WTC11 (cell line): ENCODE measurements at regions of chr19 and their contacts with region 1.

Region 1: DNA sequence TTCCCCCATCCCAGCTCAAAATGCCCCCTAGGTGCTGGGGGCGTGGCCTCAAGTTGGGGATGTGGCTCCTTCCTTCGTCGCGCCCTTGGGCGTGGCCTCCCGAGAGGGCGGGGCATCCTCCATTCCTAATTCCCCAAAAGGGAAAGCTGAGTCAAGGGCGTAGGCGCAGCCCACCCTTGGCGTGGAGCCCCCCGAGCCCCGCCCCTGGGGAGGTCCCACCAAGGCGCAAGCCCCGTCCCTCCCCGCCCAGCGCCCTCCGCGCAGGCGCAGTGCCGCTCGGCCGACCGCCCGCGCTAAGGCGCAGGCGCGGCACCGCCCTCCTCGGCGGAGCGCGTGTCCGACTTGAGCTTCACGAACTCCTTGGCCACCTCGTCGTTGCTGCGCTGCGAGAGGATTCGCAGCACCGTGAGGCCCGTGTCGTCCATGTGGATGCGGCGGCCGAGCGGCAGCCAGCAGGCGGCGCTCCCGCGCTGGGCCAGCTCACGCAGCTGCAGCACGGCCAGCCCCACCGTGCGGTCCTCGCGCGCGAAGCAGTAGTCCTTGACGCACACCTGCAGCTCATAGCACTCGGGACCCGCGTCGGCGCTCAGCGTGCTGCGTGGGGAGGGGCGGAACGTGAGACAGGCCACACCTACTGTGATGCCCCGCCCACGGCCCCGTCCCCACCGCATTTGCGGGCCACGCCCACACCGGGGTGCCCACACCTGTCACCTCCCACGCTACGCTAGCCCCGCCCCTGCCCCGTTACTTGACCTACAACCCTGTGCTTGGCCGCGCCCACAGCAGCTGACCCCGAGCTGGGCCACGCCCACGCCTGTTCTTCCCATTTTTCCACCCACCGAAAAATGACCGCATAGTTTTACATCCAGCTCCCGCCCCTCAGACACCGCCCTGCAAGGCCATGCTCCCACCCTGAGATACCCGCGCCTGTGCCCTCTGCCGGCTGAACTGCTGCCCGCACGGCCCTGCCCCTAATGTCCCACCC is 50.6 kb downstream of the COLGALT1 start:
- DNase-seq: peak; percentile 95
- ATAC-seq: peak; percentile 72
- H3K4me3 Mint-ChIP-seq: peak overlapping the region; percentile 75
- H3K27ac Mint-ChIP-seq: peak overlapping the region; percentile 94
- H3K4me1 Mint-ChIP-seq: peaks cover 22% of the 10 kb centered on the region
- H3K27me3 Mint-ChIP-seq: peaks cover 19% of the 10 kb centered on the region
- CTCF ChIP-seq: peak; percentile 50; the same call in 1 of the 2 replicates

Region 2: DNA sequence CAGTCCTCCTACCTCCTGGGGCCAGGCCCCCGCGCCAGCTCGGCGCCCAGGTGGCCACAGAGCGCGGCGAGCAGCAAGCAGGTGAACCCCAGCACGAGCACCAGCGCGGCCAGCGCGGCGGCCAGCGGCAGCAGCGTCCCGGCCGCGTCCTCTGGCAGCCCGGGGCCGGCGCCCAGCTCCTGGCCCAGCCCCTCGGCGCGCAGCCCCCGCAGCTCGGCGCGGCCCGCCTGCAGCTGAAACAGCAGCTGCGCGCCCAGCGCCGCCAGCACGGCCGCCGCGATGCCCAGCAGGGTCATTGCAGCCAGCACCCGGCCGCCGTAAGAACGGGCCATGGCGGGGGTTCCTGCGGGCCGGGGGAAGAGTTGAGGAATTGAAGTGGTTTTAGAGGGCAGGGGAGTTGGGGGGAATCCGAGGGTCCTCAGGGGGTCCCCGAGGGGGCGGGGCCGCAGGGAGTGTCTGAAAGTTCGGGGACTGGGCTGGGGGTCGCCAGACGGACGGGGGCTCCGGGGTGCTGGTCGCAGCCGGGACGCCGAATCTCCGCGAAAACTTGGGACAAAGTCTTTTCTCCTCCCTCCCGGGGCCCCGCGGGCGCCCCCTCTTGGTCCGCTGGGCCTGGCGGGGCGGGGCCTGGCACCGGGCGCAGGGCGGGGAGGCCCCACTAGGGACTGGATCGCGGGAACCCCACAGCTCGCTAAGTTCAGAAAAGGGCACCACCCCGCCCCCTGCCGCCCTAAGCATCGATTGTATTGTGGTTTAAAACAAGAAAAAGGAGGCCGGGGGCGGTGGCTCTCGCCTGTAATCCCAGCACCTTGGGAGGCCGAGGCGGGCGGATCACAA is 157.7 kb before region 1 on chr19 and contains the start of gene TMEM221:
- CTCF ChIA-PET with region 1: interaction called, 13 read pairs
- POLR2A ChIA-PET with region 1: no interaction called
- DNase-seq: peak; percentile 78
- ATAC-seq: peak; percentile 75
- H3K4me3 Mint-ChIP-seq: peak within 1 kb of the TSS; percentile 70
- H3K27ac Mint-ChIP-seq: no peak within 1 kb of the TSS
- H3K4me1 Mint-ChIP-seq: peaks cover 3% of the 10 kb centered on the region
- H3K27me3 Mint-ChIP-seq: peaks cover 22% of the 10 kb centered on the region
- CTCF ChIP-seq: peak; percentile 40; the same call in 1 of the 2 replicates
- total RNA-seq, gene TMEM221: 1.2 to 2.9 TPM (median 2.3 TPM) in 3 replicates

Region 3: DNA sequence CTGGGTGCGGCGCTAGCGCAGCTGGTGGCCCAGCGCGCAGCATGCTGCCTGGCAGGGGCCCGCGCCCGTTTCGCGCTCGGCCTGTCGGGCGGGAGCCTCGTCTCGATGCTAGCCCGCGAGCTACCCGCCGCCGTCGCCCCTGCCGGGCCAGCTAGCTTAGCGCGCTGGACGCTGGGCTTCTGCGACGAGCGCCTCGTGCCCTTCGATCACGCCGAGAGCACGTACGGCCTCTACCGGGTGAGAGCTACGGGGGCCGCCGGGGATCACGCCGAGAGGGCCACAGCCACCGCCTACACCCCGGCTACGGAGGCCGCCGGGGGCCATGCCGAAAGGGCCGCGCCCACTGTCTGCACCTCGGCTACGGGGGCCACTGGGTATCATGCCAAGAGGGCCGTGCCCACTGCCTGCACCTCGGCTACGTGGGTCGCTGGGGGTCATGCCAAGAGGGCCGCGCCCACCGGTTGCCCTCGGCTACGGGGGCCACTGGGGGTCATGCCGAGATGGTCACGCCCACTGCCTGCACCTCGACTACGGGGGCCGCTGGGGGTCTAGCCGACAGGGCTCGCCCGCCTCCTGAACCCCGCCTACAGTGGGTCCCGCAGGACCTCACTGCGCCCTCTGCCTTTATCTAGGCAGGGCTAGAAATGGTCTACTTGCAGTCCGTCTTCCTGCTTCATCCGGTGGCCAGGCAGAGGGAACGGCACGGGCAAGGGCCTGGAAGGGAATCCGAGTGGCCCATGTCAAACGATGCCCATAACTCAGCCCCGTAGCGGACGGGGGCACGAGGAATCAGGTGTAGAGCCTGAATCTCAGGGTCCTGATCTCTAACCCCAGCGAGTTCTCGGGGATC is 94.1 kb before region 1 on chr19:
- CTCF ChIA-PET with region 1: interaction called, 17 read pairs
- POLR2A ChIA-PET with region 1: interaction called, 5 read pairs
- DNase-seq: peak; percentile 87
- ATAC-seq: peak; percentile 73
- H3K4me3 Mint-ChIP-seq: peak overlapping the region; percentile 98
- H3K27ac Mint-ChIP-seq: peak overlapping the region; percentile 95
- H3K4me1 Mint-ChIP-seq: peaks cover 16% of the 10 kb centered on the region
- H3K27me3 Mint-ChIP-seq: no peaks in the 10 kb centered on the region
- CTCF ChIP-seq: no peak

Region 4: DNA sequence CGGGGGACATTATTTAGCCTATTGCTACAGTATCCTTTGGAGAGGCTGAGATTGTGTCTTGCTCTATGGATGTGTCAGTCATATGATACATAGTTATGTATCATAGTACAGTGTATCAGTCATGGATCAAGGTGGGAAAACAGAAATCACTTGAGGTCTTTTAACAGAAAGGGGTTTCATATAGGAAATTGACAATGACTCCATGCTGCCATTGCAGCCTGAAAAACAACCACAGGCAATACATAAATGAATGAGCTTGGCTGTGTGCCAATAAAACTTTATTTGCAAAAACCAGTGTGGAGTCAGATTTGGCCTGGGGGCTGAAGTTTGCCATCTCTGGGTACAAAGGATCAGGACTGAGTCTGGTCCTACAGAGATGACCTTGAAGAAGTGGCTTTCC is 15.2 kb before region 1 on chr19:
- CTCF ChIA-PET with region 1: interaction called, 11 read pairs
- POLR2A ChIA-PET with region 1: no interaction called
- DNase-seq: no peak
- ATAC-seq: no peak
- H3K4me3 Mint-ChIP-seq: no peak overlapping the region
- H3K27ac Mint-ChIP-seq: no peak overlapping the region
- H3K4me1 Mint-ChIP-seq: no peaks in the 10 kb centered on the region
- H3K27me3 Mint-ChIP-seq: peaks cover 8% of the 10 kb centered on the region
- CTCF ChIP-seq: no peak

Region 5: GRCh38 chr19:17632577-17632976 is 26.5 kb after region 1 on chr19:
- CTCF ChIA-PET with region 1: no interaction called
- POLR2A ChIA-PET with region 1: no interaction called
- DNase-seq: no peak
- ATAC-seq: no peak
- H3K4me3 Mint-ChIP-seq: no peak overlapping the region
- H3K27ac Mint-ChIP-seq: no peak overlapping the region
- H3K4me1 Mint-ChIP-seq: no peaks in the 10 kb centered on the region
- H3K27me3 Mint-ChIP-seq: no peaks in the 10 kb centered on the region
- CTCF ChIP-seq: no peak

Region 6: GRCh38 chr19:17687857-17688784 is 82.1 kb after region 1 on chr19 and contains the start of gene UNC13A:
- CTCF ChIA-PET with region 1: interaction called, 16 read pairs
- POLR2A ChIA-PET with region 1: interaction called, 6 read pairs
- DNase-seq: peak; percentile 89
- ATAC-seq: peak; percentile 24
- H3K4me3 Mint-ChIP-seq: peak within 1 kb of the TSS; percentile 99
- H3K27ac Mint-ChIP-seq: peak within 1 kb of the TSS; percentile 93
- H3K4me1 Mint-ChIP-seq: peaks cover 15% of the 10 kb centered on the region
- H3K27me3 Mint-ChIP-seq: no peaks in the 10 kb centered on the region; the same call in 1 of the 2 replicates
- CTCF ChIP-seq: no peak
- total RNA-seq, gene UNC13A: 40.7 to 42.9 TPM (median 41.1 TPM) in 3 replicates

Region 7: DNA sequence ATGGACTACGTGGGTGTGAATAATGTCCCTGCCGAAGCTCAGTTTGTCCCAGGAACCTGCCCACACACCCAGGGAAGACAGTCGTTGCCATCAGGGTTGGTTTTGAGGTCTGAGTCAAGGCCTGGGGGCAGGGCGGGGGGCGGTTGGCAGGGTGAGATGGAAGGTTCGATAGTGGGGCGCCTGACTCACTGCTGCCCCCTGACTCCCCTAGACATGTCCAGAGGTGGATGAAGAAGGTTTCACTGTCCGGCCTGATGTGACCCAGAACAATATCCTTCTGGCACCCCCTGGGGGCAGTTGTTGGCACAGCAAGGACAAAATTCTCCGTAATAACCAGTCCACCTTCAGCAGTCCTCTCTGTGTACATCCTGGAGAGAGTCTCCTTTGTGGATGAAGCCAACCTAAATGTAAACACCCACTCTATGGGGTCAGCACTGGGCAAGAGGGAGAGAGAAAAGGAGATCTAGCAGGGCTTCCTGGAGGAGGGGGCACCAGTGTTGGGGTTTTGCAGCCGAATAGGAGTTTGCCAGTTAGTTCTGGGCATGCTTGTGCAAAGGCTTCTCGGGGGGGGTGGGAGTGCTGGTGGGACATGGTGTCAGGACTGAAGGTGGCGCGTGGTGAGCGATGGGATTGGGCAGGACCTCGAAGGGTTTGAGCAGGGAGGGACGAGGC is 169.3 kb after region 1 on chr19:
- CTCF ChIA-PET with region 1: interaction called, 12 read pairs
- POLR2A ChIA-PET with region 1: no interaction called
- DNase-seq: peak; percentile 87
- ATAC-seq: peak; percentile 13
- H3K4me3 Mint-ChIP-seq: no peak overlapping the region
- H3K27ac Mint-ChIP-seq: no peak overlapping the region
- H3K4me1 Mint-ChIP-seq: peaks cover 13% of the 10 kb centered on the region
- H3K27me3 Mint-ChIP-seq: no peaks in the 10 kb centered on the region; the same call in 1 of the 2 replicates
- CTCF ChIP-seq: peak; percentile 45; the same call in 1 of the 2 replicates

Region 8: DNA sequence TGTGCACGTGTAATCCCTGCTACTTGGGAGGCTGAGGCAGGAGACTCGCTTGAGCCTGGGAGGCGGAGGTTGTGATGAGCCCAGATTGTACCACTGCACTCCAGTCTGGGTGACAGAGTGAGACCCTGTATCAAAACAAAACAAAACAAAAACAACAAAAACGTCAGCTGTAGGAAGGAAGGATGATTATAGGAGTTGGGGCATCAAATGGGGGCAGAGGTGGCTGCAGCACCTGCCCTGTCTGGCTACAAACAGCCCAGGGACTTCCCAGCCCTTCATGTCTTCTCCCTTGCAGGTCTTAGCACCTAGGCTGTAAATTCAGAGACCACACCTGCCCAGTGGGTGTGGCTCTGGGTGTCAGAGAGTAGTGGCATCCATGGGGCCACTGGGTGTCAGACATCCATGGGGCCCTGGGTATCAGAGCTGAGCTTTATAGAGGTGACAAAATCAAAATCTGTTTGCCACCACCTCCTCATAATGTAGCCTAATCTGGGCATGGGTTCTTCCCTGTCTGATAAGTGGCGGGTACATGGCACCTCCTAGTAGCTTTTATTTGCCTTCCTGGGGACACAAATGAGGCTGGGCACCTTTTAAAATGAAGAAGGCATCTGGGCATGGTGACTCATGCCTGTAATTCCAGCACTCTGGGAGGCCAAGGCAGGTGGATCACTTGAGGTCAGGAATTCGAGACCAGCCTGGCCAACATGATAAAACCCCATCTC is 184.2 kb after region 1 on chr19:
- CTCF ChIA-PET with region 1: no interaction called
- POLR2A ChIA-PET with region 1: no interaction called
- DNase-seq: no peak
- ATAC-seq: no peak
- H3K4me3 Mint-ChIP-seq: no peak overlapping the region
- H3K27ac Mint-ChIP-seq: no peak overlapping the region
- H3K4me1 Mint-ChIP-seq: peaks cover 6% of the 10 kb centered on the region
- H3K27me3 Mint-ChIP-seq: peaks cover 14% of the 10 kb centered on the region
- CTCF ChIP-seq: no peak